Right lobe of liver (tissue), 6 donors: ENCODE measurements at regions of chr9 and their contacts with region 1.

Region 1: DNA sequence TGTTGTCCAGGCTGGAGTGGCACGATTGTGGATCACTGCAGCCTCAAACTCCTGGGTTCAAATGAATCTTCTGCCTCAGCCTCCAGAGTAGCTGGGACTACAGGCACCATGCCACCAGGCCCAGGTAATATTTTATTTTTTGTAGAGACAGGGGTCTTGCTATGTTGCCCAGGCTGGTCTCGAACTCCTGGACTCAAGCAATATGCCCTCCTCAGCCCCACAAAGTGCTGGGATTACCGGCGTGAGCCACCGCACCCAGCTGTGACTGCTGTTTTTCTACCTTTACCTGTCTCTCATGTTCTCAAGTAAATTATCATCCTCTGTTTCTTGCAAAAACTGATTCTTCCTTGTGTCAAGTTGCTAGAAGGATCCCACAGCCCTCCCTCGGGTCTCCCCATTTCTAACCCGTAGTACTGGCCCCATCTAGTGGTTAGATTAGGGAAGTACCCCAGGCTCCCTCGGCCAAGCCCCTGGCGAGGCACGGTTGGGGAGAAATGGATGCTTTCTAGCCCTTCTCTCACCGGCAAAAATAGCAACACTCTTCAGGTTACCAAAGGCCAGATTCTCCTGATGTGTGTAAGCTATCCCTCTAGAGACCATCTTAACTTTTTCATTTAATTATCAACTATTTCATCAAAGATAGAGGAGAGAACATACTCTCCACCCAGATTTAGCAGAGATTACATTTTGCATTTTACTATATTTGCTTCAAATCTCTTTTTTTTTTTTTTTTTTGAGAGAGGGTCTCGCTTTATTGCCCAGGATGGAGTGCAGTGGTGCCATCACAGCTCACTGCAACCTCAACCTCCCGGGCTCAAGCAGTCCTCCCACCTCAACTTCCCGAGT is 19.2 kb upstream of the TOR1B start:
- DNase-seq: peak in 2 of 3 donors; percentile 51 to 66
- ATAC-seq: peak; percentile 96 to 100 (median 96)
- H3K4me3 ChIP-seq: no peak overlapping the region
- H3K27ac ChIP-seq: no peak overlapping the region
- H3K4me1 ChIP-seq: no peaks in the 10 kb centered on the region
- H3K27me3 ChIP-seq: no peaks in the 10 kb centered on the region
- CTCF ChIP-seq: peak; percentile 89 to 94 (median 92)
- POLR2A ChIP-seq: no peak

Region 2: DNA sequence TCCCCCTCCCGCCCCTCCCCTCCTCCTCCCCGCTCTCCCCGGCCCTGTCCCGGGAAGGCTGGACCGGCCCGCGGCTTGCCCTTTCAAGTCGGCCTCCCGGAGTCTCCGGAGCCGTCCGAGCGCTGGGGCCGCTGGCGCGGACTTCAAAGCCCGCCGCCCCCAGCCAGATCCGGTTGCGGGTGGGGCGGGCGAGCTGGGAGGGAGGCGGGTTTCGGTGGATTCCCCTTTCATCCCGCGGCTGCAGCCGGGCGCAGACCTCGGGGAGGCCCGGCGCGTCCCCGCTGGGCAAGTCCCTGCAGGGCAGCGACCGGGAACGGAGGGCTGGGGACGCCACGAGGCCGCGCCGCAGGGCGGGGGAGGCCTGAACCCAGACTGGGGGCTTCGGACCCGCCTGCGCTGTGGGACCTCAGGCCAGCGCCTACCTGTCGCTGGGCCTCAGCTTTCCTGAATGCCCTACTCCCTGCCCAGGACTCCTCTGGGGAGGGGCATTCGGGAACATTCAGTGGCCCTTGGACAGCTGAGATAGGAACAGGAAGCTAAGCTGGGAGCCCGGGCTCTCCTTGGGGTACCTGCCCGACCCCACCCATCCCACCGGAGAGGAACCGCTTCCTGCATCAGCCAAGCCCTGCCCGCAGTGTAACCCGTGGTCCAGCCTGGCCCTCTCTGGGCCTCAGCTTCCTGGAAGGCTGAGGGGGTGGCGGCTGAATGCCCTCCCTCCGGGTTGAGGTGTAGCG is 186.2 kb before region 1 on chr9:
- intact Hi-C with region 1: no loop called
- DNase-seq: peak in 1 of 3 donors; percentile 62
- ATAC-seq: peak; percentile 57 to 77 (median 74)
- H3K4me3 ChIP-seq: peak overlapping the region; percentile 23 to 42 (median 36)
- H3K27ac ChIP-seq: peak overlapping the region; percentile 55 to 59 (median 56)
- H3K4me1 ChIP-seq: peaks cover 0 to 6% (median 0%) of the 10 kb centered on the region in 4 donors
- H3K27me3 ChIP-seq: no peaks in the 10 kb centered on the region
- CTCF ChIP-seq: no peak
- POLR2A ChIP-seq: no peak

Region 3: GRCh38 chr9:129641746-129642513 is 141.8 kb before region 1 on chr9 and contains the start of gene ASB6:
- intact Hi-C with region 1: loop called (anchors 10 kb)
- DNase-seq: peak; percentile 98 to 99 (median 98)
- ATAC-seq: peak; percentile 95 to 98 (median 96)
- H3K4me3 ChIP-seq: peak within 1 kb of the TSS; percentile 79 to 95 (median 93)
- H3K27ac ChIP-seq: peak within 1 kb of the TSS; percentile 54 to 74 (median 68)
- H3K4me1 ChIP-seq: peaks cover 0 to 17% (median 8%) of the 10 kb centered on the region in 4 donors
- H3K27me3 ChIP-seq: no peaks in the 10 kb centered on the region
- CTCF ChIP-seq: peak; percentile 99 to 100 (median 100)
- POLR2A ChIP-seq: peak; percentile 49
- total RNA-seq, gene ASB6: 4.5 to 9.5 (median 5.4) TPM

Region 4: GRCh38 chr9:129737479-129738274 is 46.1 kb before region 1 on chr9:
- intact Hi-C with region 1: loop called (anchors 5 kb)
- DNase-seq: peak; percentile 86
- ATAC-seq: peak; percentile 93 to 98 (median 96)
- H3K4me3 ChIP-seq: peak overlapping the region; percentile 61 to 72 (median 66)
- H3K27ac ChIP-seq: peak overlapping the region; percentile 32 to 60 (median 37)
- H3K4me1 ChIP-seq: no peaks in the 10 kb centered on the region
- H3K27me3 ChIP-seq: no peaks in the 10 kb centered on the region
- CTCF ChIP-seq: peak; percentile 94 to 99 (median 98)
- POLR2A ChIP-seq: no peak

Region 5: DNA sequence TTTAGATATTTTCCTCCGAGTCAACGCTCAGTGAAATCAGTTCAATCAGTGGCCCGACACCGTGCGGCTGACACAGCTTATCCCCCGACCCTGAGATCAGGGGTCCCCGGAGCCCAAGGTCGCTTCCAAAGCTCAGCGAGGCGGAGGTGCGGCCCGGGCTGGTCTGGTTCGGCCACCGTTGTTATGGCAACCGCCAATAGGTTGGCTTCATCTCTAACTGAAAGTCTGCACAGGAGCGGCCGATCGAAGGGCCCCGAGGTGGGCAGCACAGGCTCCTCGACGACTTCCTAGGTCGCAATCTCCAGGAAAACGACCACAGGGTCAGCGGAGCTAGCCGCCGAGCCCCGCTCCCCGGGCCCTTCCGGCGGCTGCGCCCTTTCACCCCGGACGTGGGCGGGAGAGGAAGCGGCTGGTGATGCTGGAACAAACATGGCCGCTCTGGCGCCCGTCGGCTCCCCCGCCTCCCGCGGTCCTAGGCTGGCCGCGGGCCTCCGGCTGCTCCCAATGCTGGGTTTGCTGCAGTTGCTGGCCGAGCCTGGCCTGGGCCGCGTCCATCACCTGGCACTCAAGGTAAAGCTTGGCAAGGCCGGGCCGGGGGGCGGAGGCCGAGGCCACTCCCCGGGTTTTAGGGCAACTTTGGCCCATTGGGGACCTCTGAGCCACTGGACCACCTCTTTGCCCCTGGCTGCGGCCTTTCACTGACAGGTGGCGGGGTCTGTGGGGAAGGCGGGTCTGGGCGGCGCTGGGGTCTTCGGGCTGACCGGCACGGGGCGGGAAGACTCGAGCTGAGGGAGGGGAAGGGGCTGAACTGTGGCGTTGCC is 270.0 kb after region 1 on chr9 and contains the start of gene GPR107:
- intact Hi-C with region 1: no loop called
- DNase-seq: peak; percentile 82 to 86 (median 85)
- ATAC-seq: peak; percentile 97 to 98 (median 97)
- H3K4me3 ChIP-seq: peak within 1 kb of the TSS; percentile 89 to 97 (median 94)
- H3K27ac ChIP-seq: peak within 1 kb of the TSS; percentile 64 to 76 (median 67)
- H3K4me1 ChIP-seq: peaks cover 0 to 17% (median 6%) of the 10 kb centered on the region in 4 donors
- H3K27me3 ChIP-seq: no peaks in the 10 kb centered on the region
- CTCF ChIP-seq: no peak
- POLR2A ChIP-seq: peak; percentile 82
- total RNA-seq, gene GPR107: 12.6 to 18.2 (median 14.5) TPM